ENCODE measurements at regions of chr1 and their contacts with region 1.

Region 1: GRCh38 chr1:8497210-8497801 is 179.4 kb downstream of the SLC45A1 start:
- DNase-seq: peak; percentile 84
- H3K4me3 ChIP-seq: peak overlapping the region; percentile 40
- H3K27ac ChIP-seq: peak overlapping the region; percentile 94
- H3K4me1 ChIP-seq: peaks cover 71% of the 10 kb centered on the region
- CTCF ChIP-seq: no peak

Region 2: GRCh38 chr1:8226747-8227146 is 270.6 kb before region 1 on chr1:
- CTCF ChIA-PET with region 1: no interaction called
- POLR2A ChIA-PET with region 1: no interaction called
- intact Hi-C with region 1: no loop called
- DNase-seq: no peak
- H3K4me3 ChIP-seq: no peak overlapping the region
- H3K27ac ChIP-seq: no peak overlapping the region
- H3K4me1 ChIP-seq: no peaks in the 10 kb centered on the region
- CTCF ChIP-seq: no peak

Region 3: DNA sequence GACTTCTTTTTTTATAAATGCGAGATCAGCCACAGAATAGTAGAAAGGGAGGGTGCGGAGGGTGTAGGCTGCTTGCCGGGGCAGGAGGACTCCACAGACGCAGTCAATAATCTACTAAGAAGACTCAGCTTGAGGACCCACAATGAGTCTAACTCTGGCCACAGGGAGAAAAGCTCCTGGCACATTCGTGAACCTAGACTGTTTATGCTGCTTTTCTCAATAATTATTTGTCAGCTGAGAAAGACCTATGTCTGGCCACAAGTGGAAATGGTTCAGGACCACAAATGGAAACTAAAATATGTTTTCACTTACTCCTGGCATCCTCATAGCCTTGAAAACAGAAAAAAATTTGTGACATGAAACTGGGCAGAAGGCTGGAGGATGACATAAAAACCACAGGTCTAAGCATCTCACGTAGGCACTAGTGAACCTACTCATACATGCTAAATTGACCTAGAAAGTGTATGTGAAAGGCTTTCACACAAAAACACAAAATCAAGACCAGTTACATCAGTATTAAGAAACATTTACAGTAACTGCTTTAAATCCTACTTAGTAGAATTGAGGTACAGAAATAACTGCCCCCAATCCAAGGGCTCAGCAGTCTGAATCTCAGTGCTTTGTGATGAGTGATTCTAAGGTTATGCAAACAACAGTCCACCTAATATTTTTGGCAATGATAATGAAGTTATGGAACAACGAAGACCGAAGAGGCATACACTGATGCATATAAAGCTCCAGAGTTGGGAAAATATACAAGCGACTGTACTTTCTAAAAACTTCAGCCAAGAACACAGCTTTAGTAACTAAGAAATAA is 19.9 kb before region 1 on chr1:
- CTCF ChIA-PET with region 1: interaction called, 3 read pairs
- POLR2A ChIA-PET with region 1: interaction called, 24 read pairs
- intact Hi-C with region 1: loop called (anchors 2 kb)
- DNase-seq: peak; percentile 40
- H3K4me3 ChIP-seq: peak overlapping the region; percentile 7
- H3K27ac ChIP-seq: peak overlapping the region; percentile 64
- H3K4me1 ChIP-seq: peaks cover 72% of the 10 kb centered on the region
- CTCF ChIP-seq: no peak

Region 4: DNA sequence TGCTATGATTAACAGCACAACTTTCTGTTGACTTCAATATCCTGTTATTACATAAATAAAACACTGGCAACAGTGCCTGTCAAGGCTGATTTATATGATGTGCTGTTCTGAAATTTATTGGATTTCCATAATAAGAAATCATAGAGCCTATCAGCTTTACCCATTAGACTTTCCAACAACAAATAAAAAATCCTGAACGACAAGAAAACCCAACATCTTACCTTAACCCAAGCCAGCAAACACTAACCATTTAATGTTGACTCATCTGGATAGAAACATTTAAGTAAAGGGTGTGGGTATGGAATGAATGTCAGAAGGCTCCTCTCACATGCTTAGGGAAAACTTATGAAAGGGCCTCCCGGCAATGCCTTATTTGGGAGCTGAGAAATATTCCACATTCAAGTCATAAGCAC is 14.3 kb before region 1 on chr1:
- CTCF ChIA-PET with region 1: no interaction called
- POLR2A ChIA-PET with region 1: interaction called, 24 read pairs
- intact Hi-C with region 1: no loop called
- DNase-seq: no peak
- H3K4me3 ChIP-seq: no peak overlapping the region
- H3K27ac ChIP-seq: no peak overlapping the region
- H3K4me1 ChIP-seq: peaks cover 19% of the 10 kb centered on the region
- CTCF ChIP-seq: no peak

Region 5: GRCh38 chr1:8510041-8510823 is 12.9 kb after region 1 on chr1:
- CTCF ChIA-PET with region 1: no interaction called
- POLR2A ChIA-PET with region 1: interaction called, 22 read pairs
- intact Hi-C with region 1: no loop called
- DNase-seq: peak; percentile 68
- H3K4me3 ChIP-seq: peak overlapping the region; percentile 53
- H3K27ac ChIP-seq: peak overlapping the region; percentile 88
- H3K4me1 ChIP-seq: peaks cover 84% of the 10 kb centered on the region
- CTCF ChIP-seq: no peak

Region 6: GRCh38 chr1:8516793-8517556 is 19.7 kb after region 1 on chr1:
- CTCF ChIA-PET with region 1: no interaction called
- POLR2A ChIA-PET with region 1: interaction called, 22 read pairs
- intact Hi-C with region 1: no loop called
- DNase-seq: peak; percentile 76
- H3K4me3 ChIP-seq: peak overlapping the region; percentile 46
- H3K27ac ChIP-seq: peak overlapping the region; percentile 85
- H3K4me1 ChIP-seq: peaks cover 100% of the 10 kb centered on the region
- CTCF ChIP-seq: no peak

Region 7: GRCh38 chr1:8525558-8526275 is 28.4 kb after region 1 on chr1:
- CTCF ChIA-PET with region 1: no interaction called
- POLR2A ChIA-PET with region 1: interaction called, 17 read pairs
- intact Hi-C with region 1: loop called (anchors 1 kb)
- DNase-seq: peak; percentile 92
- H3K4me3 ChIP-seq: peak overlapping the region; percentile 74
- H3K27ac ChIP-seq: peak overlapping the region; percentile 91
- H3K4me1 ChIP-seq: peaks cover 80% of the 10 kb centered on the region
- CTCF ChIP-seq: no peak